CD8-positive, alpha-beta T cell (primary cell): ENCODE measurements at regions of chr4 and their contacts with region 1.

Region 1: DNA sequence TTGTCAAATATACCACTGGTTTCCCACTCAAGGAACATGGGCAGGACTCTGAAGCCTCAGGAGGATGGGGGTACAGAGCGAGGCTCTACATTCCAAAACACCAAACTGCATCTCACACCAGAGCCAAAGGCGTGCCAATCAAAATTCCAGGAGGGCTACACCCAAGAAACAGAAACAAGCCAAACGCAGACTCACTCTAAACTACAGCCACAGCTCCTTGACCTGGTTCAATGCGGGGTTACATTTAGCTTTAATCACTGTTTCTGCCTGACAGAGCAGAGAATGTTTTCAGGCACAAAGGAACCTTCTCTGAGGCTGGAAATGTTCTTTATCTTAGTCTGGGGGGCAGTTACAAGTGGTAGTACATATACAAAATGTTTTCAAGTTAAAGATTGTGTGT is 2121.5 kb upstream of the AGA start:
- DNase-seq: no peak
- ATAC-seq: no peak
- H3K4me3 ChIP-seq: no peak overlapping the region
- H3K4me3 Mint-ChIP-seq: no peak overlapping the region
- H3K27ac ChIP-seq: no peak overlapping the region
- H3K27ac Mint-ChIP-seq: no peak overlapping the region
- H3K4me1 ChIP-seq: no peaks in the 10 kb centered on the region
- H3K4me1 Mint-ChIP-seq: no peaks in the 10 kb centered on the region
- H3K27me3 ChIP-seq: no peaks in the 10 kb centered on the region
- H3K27me3 Mint-ChIP-seq: no peaks in the 10 kb centered on the region
- CTCF ChIP-seq: no peak

Region 2: GRCh38 chr4:179307297-179308136 is 256.2 kb before region 1 on chr4:
- CTCF ChIA-PET with region 1: interaction called, 10 read pairs
- POLR2A ChIA-PET with region 1: no interaction called
- intact Hi-C with region 1: no loop called
- DNase-seq: peak in 1 of 9 experiments; percentile 1
- ATAC-seq: no peak
- H3K4me3 ChIP-seq: no peak overlapping the region
- H3K4me3 Mint-ChIP-seq: no peak overlapping the region
- H3K27ac ChIP-seq: no peak overlapping the region
- H3K27ac Mint-ChIP-seq: no peak overlapping the region
- H3K4me1 ChIP-seq: no peaks in the 10 kb centered on the region
- H3K4me1 Mint-ChIP-seq: no peaks in the 10 kb centered on the region
- H3K27me3 ChIP-seq: no peaks in the 10 kb centered on the region
- H3K27me3 Mint-ChIP-seq: no peaks in the 10 kb centered on the region
- CTCF ChIP-seq: no peak